Ovary (tissue), 10 donors: ENCODE measurements at regions of chr15 and their contacts with region 1.

Region 1: DNA sequence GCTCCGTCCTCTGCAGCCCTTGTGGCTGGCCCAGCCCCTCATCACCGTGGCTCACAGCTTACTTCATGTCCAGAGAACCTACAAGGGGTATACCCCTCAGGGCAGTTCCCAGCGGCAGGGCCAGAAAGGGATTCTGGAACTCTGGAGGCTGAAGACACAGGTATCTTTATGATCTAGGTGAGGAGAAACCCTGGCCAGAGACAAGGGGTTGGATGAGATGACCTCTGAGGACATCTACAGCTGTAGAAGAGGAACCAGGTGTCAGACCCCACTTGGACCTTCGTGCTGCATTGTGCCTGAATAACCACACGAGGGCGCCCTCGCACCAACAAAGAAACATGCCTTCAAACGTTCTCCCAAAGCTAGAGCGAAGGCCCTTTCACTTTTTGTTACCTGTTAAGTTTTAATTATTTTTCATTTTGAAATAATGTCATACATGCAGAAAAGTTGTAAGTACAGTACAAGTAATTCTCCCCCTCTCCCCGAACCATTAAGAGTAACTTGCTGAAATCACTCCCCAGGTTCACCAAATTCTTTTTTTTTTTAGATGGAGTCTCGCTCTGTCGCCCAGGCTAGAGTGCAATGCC is 118.7 kb upstream of the SMAD3 start:
- DNase-seq: peak; percentile 49 to 82 (median 76)
- H3K4me3 ChIP-seq: no peak overlapping the region
- H3K27ac ChIP-seq: no peak overlapping the region
- H3K4me1 ChIP-seq: no peaks in the 10 kb centered on the region
- H3K27me3 ChIP-seq: no peaks in the 10 kb centered on the region
- CTCF ChIP-seq: peak; percentile 80 to 90 (median 87)
- EP300 ChIP-seq: no peak
- POLR2A ChIP-seq: no peak

Region 2: GRCh38 chr15:67296188-67296587 is 349.5 kb after region 1 on chr15:
- intact Hi-C with region 1: loop called in 3 of 4 experiments (anchors 2 to 5 kb)
- DNase-seq: no peak
- H3K4me3 ChIP-seq: no peak overlapping the region
- H3K27ac ChIP-seq: no peak overlapping the region
- H3K4me1 ChIP-seq: no peaks in the 10 kb centered on the region
- H3K27me3 ChIP-seq: no peaks in the 10 kb centered on the region
- CTCF ChIP-seq: no peak
- EP300 ChIP-seq: no peak
- POLR2A ChIP-seq: no peak

Region 3: DNA sequence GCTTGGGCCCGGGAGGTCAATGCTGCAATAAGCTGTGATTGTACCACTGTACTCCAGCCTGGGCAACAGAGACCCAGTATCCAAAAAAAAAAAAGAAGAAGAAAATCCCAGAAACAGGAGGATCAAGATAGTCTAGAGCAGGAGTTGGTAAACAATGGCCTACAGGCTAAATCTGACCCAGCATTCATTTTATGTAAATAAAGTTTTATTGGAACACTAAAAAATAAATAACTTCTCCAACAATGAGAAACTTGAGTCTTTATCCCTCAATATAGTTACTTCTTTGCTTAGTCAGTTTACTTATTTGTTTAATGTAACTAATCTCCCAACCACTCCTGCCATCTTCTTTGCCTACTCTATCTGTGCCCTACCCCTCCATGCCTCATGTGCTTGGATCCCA is 480.2 kb after region 1 on chr15:
- intact Hi-C with region 1: loop called (anchors 2 to 10 kb)
- DNase-seq: no peak
- H3K4me3 ChIP-seq: no peak overlapping the region
- H3K27ac ChIP-seq: no peak overlapping the region
- H3K4me1 ChIP-seq: no peaks in the 10 kb centered on the region
- H3K27me3 ChIP-seq: no peaks in the 10 kb centered on the region
- CTCF ChIP-seq: no peak
- EP300 ChIP-seq: no peak
- POLR2A ChIP-seq: no peak

Region 4: DNA sequence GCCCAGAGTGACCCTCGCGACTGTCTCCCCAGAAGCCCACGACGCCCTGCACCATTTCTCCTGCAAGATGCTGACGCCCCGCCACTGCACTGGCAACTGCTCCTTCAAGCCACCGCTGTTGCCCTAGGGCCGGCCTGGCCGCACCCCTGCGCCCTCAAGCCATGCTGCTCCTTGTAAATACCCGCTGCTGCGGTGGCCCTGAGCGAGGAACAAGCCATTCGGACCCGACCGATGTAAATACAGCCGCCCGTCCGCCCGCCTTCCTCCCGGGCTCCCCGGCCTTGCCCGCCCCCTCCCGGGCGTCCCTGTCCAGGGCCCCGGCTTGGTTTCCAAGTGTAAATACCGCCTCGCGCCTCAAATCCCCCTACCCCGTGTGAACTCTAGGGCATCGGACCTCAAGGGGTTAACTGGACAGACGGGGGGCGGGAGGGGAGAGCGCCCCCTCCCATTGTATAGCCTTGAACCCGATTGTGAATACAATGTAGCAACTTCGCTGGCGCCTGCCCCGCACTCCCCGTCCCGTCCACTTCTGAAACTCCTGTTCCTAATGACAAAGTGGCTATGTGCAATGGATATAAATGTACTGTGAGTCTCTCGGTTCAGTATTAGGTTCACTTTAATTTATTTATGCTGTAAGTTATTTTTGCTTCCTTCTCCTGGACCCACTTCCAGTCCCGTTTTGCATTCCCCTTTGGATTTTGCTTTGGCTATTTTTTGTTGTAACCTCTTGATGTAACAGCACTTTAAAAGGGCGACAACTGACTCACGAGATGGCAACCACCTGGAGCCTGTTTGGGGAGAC is 887.2 kb after region 1 on chr15:
- intact Hi-C with region 1: loop called in 3 of 4 experiments (anchors 5 to 10 kb)
- DNase-seq: peak in 2 of 5 donors; percentile 31 to 34
- H3K4me3 ChIP-seq: peak overlapping the region; percentile 27
- H3K27ac ChIP-seq: no peak overlapping the region
- H3K4me1 ChIP-seq: peaks cover 19% of the 10 kb centered on the region
- H3K27me3 ChIP-seq: peaks cover 12% of the 10 kb centered on the region
- CTCF ChIP-seq: peak in 1 of 3 donors; percentile 25
- EP300 ChIP-seq: no peak
- POLR2A ChIP-seq: no peak